Vagina (tissue), 2 donors: ENCODE measurements at regions of chr17 and their contacts with region 1.

Region 1: DNA sequence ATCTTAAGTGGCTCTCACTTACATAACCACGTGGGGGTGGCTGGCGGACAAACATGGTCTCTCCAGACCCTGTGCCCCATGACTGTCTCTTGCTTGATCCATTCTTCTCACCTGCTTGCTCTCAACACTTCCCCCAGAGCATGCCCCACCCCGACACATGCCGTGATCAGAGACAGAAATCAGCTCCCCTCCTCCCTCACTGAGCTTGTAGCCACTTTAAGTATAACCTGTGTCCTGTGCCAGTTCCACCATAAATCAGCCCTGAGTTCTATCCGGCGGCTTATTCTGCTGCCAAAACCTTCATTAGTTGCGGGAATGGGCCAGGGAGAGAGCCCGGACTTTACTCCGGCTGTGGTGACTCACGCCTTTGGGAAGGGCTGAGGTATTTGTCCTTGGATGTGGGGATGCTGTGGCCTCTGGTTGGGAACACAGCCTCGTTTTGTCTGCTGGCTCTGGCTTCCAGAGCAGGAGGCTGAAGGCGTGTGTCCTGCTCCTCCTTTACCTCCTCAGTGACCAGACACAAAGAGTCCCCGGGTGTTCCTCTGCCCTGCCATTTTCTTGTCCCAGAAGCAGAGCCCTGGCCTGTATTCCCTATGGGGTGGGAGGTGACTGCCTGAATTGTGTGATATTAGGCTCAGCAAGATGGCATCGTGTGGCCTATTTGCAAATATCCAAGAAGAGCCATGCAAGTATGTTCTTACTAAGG is 21.1 kb downstream of the ANKRD40 start:
- DNase-seq: peak in 1 of 2 donors; percentile 97
- H3K4me3 ChIP-seq: no peak overlapping the region
- H3K27ac ChIP-seq: peak overlapping the region; percentile 82
- H3K4me1 ChIP-seq: peaks cover 27% of the 10 kb centered on the region
- H3K27me3 ChIP-seq: no peaks in the 10 kb centered on the region
- CTCF ChIP-seq: no peak
- POLR2A ChIP-seq: no peak

Region 2: DNA sequence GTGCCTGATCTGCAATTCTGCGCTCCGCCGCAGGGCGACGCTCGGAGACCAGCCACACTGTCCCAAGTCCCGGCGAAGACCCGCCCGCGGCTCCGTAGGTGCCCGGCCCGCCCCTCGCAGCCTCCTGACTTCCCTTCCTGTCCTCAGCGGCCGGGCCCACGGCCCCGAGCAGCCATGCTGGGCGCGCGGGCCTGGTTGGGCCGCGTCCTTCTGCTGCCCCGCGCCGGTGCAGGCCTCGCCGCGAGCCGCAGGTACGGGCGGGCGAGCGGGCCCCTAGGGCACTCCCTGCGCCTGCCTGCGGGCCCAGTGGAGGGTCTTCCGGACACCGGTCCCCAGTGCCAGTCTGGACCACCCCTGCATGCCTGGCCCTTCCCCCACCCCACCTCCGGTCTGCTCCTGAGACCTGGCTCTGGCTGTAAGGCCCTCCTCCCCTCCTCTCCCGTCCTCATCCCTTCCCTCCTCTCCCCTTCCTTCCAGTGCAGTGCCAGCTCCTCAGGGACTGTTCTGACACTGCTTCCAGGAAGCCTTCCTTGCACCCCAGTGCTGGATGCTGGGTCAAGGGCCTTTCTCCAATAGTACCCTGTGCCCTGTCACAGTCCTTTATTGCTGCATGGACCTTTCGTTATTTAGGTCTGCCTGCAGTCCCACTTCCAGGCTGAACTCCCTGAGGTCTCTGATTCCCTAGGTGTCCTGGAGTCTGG is 139.5 kb before region 1 on chr17 and contains the start of gene SPATA20:
- intact Hi-C with region 1: loop called (anchors 5 kb)
- DNase-seq: no peak
- H3K4me3 ChIP-seq: peak within 1 kb of the TSS; percentile 58 to 61
- H3K27ac ChIP-seq: peak within 1 kb of the TSS; percentile 93
- H3K4me1 ChIP-seq: peaks cover 26% of the 10 kb centered on the region
- H3K27me3 ChIP-seq: no peaks in the 10 kb centered on the region
- CTCF ChIP-seq: peak; percentile 89 to 99 (median 96)
- POLR2A ChIP-seq: peak in 1 of 2 donors; percentile 81
- total RNA-seq, gene SPATA20: 73.4 TPM